Panc1 (cell line): ENCODE measurements at regions of chr5 and their contacts with region 1.

Region 1: DNA sequence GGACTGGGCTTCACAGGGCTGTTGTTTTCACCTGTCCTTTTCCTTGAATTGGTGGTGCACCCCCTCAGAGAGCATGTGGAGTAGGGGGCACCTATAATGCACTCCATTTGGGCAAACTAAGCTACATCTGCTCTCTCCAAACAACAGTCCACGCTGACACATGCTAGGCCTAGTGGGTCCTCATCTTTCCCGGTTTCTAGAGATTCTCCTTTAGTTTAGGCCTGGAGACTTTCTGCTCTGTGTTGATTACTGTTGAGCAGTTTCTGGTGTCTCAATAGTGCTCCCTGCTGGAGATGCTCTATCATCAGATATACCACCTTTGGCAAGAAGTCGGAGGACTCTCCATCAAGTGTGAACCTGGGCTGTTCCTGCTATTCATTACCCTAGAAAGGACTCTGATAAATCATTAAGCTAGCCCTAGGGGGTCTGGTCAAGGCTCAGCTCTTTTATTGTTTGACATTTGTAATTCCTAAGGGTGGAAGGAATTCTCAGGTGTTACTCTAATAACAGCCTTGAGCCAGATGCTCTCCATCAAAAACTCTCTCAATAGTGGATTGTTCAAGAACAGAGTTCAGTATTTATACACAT is 64.0 kb upstream of the FYB1 start:
- DNase-seq: peak; percentile 74
- ATAC-seq: peak; percentile 92
- H3K4me3 ChIP-seq: no peak overlapping the region
- H3K27ac ChIP-seq: no peak overlapping the region
- H3K4me1 ChIP-seq: no peaks in the 10 kb centered on the region
- H3K27me3 ChIP-seq: peaks cover 4% of the 10 kb centered on the region; the same call in 1 of the 2 replicates
- CTCF ChIP-seq: peak; percentile 74

Region 2: DNA sequence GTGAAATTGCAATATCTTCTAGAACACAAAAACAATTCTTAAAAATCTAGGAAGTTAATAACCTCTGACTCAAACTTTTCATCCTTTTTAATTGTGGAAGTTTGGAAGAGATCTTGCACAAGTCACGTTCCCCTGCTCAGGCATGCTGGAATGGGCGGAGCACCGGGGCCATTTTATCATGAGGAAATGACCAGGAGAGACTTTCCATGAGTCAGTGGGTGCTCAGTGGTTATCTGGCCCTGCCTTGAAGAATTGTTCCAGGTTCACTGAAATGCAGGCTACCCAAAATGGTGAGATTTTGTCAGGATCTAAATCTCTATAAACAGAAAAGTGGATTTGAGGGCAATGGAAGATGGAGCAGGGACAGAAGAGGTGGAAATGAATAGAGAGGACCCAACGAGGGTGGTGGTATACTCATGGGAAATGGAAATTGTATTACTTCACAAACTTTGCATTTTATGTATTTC is 125.2 kb before region 1 on chr5:
- CTCF ChIA-PET with region 1: no interaction called
- POLR2A ChIA-PET with region 1: no interaction called
- in situ Hi-C with region 1: no loop called
- intact Hi-C with region 1: loop called (anchors 10 kb)
- DNase-seq: no peak
- ATAC-seq: no peak
- H3K4me3 ChIP-seq: no peak overlapping the region
- H3K27ac ChIP-seq: no peak overlapping the region
- H3K4me1 ChIP-seq: no peaks in the 10 kb centered on the region
- H3K27me3 ChIP-seq: peaks cover 5% of the 10 kb centered on the region; the same call in 1 of the 2 replicates
- CTCF ChIP-seq: no peak